Mammary epithelial cell (primary cell): ENCODE measurements at regions of chr19 and their contacts with region 1.

Region 1: GRCh38 chr19:47729992-47730889 is 15.1 kb upstream of the NOP53 start:
- DNase-seq: peak; percentile 52
- H3K4me3 ChIP-seq: peak overlapping the region; percentile 42 to 49 (median 45)
- H3K27ac ChIP-seq: peak overlapping the region; percentile 77
- H3K4me1 ChIP-seq: peaks cover 42% of the 10 kb centered on the region
- H3K27me3 ChIP-seq: no peaks in the 10 kb centered on the region
- CTCF ChIP-seq: no peak

Region 2: DNA sequence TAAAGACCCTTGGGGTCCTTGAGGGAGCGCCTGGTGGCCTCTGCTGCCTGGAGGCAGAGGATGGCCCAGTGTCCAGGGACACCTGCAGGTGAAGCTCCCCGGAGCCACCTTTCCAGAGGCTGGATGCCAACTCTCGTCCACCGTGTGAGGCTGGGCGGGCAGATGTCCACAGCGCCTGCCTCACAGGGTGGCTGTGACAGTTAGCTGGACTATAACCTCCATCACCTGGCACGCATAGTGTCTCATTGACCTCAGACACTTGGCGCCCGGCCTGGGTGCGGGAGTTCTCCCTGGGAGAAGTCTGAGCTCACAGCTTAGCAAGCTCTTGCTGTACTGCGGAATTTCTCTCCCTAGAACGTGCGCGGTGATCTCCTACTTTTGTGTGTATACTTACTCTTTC is 111.5 kb before region 1 on chr19:
- CTCF ChIA-PET with region 1: no interaction called
- dilution Hi-C with region 1: no loop called
- in situ Hi-C with region 1: no loop called
- intact Hi-C with region 1: no loop called
- DNase-seq: no peak
- H3K4me3 ChIP-seq: no peak overlapping the region
- H3K27ac ChIP-seq: no peak overlapping the region
- H3K4me1 ChIP-seq: peaks cover 5% of the 10 kb centered on the region
- H3K27me3 ChIP-seq: no peaks in the 10 kb centered on the region
- CTCF ChIP-seq: no peak

Region 3: GRCh38 chr19:47693493-47693892 is 36.7 kb before region 1 on chr19:
- CTCF ChIA-PET with region 1: no interaction called
- dilution Hi-C with region 1: no loop called
- in situ Hi-C with region 1: no loop called
- intact Hi-C with region 1: no loop called
- DNase-seq: no peak
- H3K4me3 ChIP-seq: no peak overlapping the region
- H3K27ac ChIP-seq: no peak overlapping the region
- H3K4me1 ChIP-seq: no peaks in the 10 kb centered on the region
- H3K27me3 ChIP-seq: no peaks in the 10 kb centered on the region
- CTCF ChIP-seq: no peak

Region 4: GRCh38 chr19:47713046-47714021 is 16.9 kb before region 1 on chr19 and contains the start of gene EHD2:
- CTCF ChIA-PET with region 1: no interaction called
- dilution Hi-C with region 1: no loop called
- in situ Hi-C with region 1: no loop called
- intact Hi-C with region 1: loop called (anchors 2 kb)
- DNase-seq: peak; percentile 68
- H3K4me3 ChIP-seq: peak within 1 kb of the TSS; percentile 84 to 97 (median 84)
- H3K27ac ChIP-seq: peak within 1 kb of the TSS; percentile 58
- H3K4me1 ChIP-seq: peaks cover 17% of the 10 kb centered on the region
- H3K27me3 ChIP-seq: no peaks in the 10 kb centered on the region
- CTCF ChIP-seq: peak; percentile 62 to 96
- total RNA-seq, gene EHD2: 111 to 178 TPM

Region 5: DNA sequence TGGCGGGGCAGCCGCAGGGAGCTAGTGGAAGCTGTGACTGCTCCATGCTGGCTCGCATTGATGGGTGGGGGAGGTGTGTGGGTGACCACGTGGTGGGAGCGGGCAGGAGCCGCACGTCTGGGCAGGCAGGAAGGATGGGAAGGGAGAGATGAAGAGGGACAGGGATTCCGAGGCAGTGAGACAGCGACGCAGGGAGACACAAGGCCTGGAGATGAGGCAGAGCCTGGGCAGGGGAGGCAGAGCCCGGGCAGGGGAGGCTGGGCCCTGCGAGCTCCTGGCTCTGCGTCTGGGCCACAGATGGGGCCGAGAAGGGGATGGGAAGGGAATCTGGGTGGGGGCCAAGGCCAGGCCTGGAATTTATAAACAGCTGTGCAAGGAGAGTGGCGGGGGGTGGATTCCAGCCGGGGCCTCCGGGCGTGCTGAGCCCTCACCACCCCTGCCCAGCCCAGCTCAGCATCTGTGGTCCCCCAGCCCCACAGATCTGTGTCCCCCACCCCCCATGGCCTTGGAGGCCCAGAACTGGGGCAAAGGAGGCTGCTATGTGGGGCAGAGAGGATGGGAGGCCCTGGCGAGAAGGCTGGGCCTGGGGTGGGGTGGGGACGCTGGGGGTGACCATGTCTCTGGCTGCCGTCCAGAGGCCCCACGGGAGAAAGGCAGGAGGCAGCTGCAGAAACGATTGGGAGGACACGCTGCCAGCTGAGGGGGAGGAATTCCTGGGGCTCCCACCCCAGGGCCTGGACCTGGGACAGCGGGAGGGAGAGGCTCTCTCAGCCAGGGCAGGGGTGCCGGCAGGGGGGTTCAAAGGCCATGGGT is 11.0 kb before region 1 on chr19:
- CTCF ChIA-PET with region 1: no interaction called
- dilution Hi-C with region 1: no loop called
- in situ Hi-C with region 1: no loop called
- intact Hi-C with region 1: loop called (anchors 1 kb)
- DNase-seq: peak; percentile 95
- H3K4me3 ChIP-seq: peak overlapping the region; percentile 0 to 36 (median 32)
- H3K27ac ChIP-seq: peak overlapping the region; percentile 65
- H3K4me1 ChIP-seq: peaks cover 42% of the 10 kb centered on the region
- H3K27me3 ChIP-seq: no peaks in the 10 kb centered on the region
- CTCF ChIP-seq: no peak